ENCODE measurements at regions of chr1 and their contacts with region 1.

Region 1: GRCh38 chr1:108691942-108692723 is at the start of gene PRPF38B:
- DNase-seq: peak; percentile 91
- ATAC-seq: peak; percentile 89
- H3K4me3 Mint-ChIP-seq: peak within 1 kb of the TSS; percentile 99
- H3K27ac Mint-ChIP-seq: peak within 1 kb of the TSS; percentile 98
- H3K4me1 Mint-ChIP-seq: peaks cover 46% of the 10 kb centered on the region
- H3K27me3 Mint-ChIP-seq: no peaks in the 10 kb centered on the region
- CTCF ChIP-seq: no peak
- total RNA-seq, gene PRPF38B: 77.3 and 88.1 TPM in 2 replicates

Region 2: DNA sequence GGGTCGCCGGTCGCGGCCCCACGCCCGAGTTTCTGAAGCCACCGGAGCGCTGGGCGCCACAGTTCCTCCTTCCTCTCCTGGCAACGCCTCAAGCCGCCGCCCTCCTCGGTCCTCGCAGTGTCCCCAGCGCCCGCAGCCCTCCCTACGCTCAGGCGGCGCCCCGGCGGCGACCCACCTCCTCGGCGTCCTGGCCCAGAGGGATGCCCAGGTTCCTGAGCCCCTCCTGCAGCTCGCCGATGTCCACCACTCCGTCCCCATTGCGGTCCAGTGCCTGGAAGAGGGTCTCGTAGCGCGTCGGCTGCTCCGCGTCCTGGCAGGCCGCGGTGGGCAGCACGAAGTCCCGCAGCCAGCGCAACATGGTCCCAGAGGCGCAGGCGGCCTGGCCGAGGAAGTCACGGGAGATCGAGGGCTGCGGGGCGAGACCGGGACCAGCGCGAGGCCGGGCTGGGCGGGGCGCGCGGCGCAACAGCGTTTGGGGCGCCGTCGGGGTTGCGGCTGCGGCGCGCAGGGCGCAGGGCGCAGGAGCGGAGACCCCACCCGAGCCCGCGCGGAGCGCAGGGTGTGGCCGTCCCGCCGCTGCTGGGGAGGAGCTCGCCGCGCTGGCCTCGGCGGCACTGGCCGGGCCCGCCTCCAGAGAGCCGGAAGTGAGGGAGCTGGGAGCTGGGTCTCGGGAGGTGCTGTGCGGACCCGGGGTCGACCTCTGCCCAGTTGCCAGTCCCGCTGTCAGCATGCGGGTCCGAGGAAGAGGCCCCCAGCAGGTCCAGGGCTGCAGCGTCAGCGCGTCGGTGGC is 492.2 kb before region 1 on chr1 and contains the start of gene SLC25A24:
- CTCF ChIA-PET with region 1: no interaction called
- POLR2A ChIA-PET with region 1: interaction called, 13 read pairs
- intact Hi-C with region 1: loop called (anchors 1 kb)
- DNase-seq: peak; percentile 85
- ATAC-seq: peak; percentile 94
- H3K4me3 Mint-ChIP-seq: peak within 1 kb of the TSS; percentile 93
- H3K27ac Mint-ChIP-seq: peak within 1 kb of the TSS; percentile 86
- H3K4me1 Mint-ChIP-seq: peaks cover 29% of the 10 kb centered on the region
- H3K27me3 Mint-ChIP-seq: no peaks in the 10 kb centered on the region
- CTCF ChIP-seq: no peak
- total RNA-seq, gene SLC25A24: 20.2 and 22.1 TPM in 2 replicates

Region 3: DNA sequence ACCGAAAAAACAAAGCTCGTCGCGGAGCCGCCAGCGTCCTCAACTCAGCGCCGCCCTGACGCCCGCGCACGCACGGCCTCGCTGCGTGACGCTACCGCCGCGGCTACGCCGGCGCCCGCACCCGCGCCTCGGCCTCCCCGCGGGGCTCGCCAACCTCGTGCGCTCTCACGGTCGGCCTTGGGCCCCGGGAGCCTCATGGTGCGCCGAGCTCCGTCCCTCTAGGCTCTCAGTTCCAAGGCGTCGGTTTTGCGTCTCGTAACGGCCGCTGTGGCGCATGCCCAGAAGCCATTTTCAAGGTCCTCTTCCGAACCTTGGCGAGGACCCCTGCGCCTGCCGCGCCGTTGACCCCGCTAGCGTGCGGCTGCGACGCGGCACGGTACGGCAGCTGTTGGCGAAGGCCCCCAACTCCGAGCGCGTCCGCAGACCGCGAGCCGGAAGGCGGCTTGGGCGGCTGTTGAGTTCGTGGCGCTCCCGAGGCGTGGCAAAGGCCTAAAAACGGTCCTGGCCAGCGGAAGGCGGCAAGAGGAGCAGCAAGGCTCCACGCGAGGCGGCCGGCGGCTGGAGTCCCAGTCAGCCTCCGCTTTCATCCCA is 31.0 kb before region 1 on chr1 and contains the start of gene HENMT1:
- CTCF ChIA-PET with region 1: interaction called, 4 read pairs
- POLR2A ChIA-PET with region 1: interaction called, 110 read pairs
- intact Hi-C with region 1: loop called (anchors 1 kb)
- DNase-seq: peak; percentile 75
- ATAC-seq: peak; percentile 82
- H3K4me3 Mint-ChIP-seq: peak within 1 kb of the TSS; percentile 86
- H3K27ac Mint-ChIP-seq: peak within 1 kb of the TSS; percentile 90
- H3K4me1 Mint-ChIP-seq: peaks cover 12% of the 10 kb centered on the region
- H3K27me3 Mint-ChIP-seq: no peaks in the 10 kb centered on the region
- CTCF ChIP-seq: no peak
- total RNA-seq, gene HENMT1: 6.1 and 6.4 TPM in 2 replicates

Region 4: GRCh38 chr1:108862698-108863477 is 170.8 kb after region 1 on chr1:
- CTCF ChIA-PET with region 1: no interaction called
- POLR2A ChIA-PET with region 1: interaction called, 10 read pairs
- intact Hi-C with region 1: no loop called
- DNase-seq: no peak
- ATAC-seq: peak; percentile 96
- H3K4me3 Mint-ChIP-seq: no peak overlapping the region
- H3K27ac Mint-ChIP-seq: peak overlapping the region; percentile 81
- H3K4me1 Mint-ChIP-seq: peaks cover 22% of the 10 kb centered on the region
- H3K27me3 Mint-ChIP-seq: peaks cover 1% of the 10 kb centered on the region
- CTCF ChIP-seq: no peak

Region 5: DNA sequence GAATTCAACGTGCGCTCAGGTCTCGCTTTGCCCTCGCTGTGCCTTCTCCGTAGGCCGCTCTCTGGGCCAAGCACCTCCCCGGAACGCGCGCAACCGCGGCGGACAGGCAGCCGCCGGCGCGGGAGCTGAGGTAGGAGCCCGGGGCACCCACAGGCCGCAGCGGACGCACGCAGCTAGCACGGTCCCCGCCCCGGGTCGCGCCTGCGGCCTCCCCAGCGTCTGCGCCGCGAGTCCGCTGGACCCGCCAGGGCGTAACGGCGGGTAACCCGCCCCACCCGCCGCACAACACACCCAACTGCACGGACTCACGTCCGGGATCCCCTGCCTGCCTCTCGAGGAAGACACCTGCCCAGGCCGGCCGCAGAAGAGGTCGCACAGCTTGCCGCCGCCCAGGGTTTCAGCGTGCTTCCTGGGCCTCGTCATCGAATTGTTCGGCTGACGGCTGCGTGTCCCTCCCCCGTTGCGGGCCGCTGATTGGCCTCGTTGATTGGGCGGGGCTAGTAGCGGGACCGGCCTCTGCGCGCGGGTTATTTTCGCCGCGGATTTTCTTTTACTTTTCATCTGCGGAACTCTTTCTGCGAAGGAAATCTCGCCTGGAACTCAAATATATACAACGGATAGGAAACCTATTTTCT is 271.0 kb after region 1 on chr1 and contains the start of gene CLCC1:
- CTCF ChIA-PET with region 1: no interaction called
- POLR2A ChIA-PET with region 1: interaction called, 12 read pairs
- intact Hi-C with region 1: loop called (anchors 2 kb)
- DNase-seq: peak; percentile 84
- ATAC-seq: peak; percentile 94
- H3K4me3 Mint-ChIP-seq: peak within 1 kb of the TSS; percentile 88
- H3K27ac Mint-ChIP-seq: peak within 1 kb of the TSS; percentile 91
- H3K4me1 Mint-ChIP-seq: peaks cover 35% of the 10 kb centered on the region
- H3K27me3 Mint-ChIP-seq: no peaks in the 10 kb centered on the region
- CTCF ChIP-seq: no peak
- total RNA-seq, gene CLCC1: 19.5 and 28.3 TPM in 2 replicates

Region 6: GRCh38 chr1:109090196-109091077 is 398.3 kb after region 1 on chr1 and contains the start of gene TMEM167B:
- CTCF ChIA-PET with region 1: no interaction called
- POLR2A ChIA-PET with region 1: interaction called, 3 read pairs
- intact Hi-C with region 1: loop called (anchors 2 kb)
- DNase-seq: peak; percentile 79
- ATAC-seq: peak; percentile 87
- H3K4me3 Mint-ChIP-seq: peak within 1 kb of the TSS; percentile 98
- H3K27ac Mint-ChIP-seq: peak within 1 kb of the TSS; percentile 97
- H3K4me1 Mint-ChIP-seq: peaks cover 35% of the 10 kb centered on the region
- H3K27me3 Mint-ChIP-seq: no peaks in the 10 kb centered on the region
- CTCF ChIP-seq: no peak
- total RNA-seq, gene TMEM167B: 45.0 and 48.2 TPM in 2 replicates

Region 7: DNA sequence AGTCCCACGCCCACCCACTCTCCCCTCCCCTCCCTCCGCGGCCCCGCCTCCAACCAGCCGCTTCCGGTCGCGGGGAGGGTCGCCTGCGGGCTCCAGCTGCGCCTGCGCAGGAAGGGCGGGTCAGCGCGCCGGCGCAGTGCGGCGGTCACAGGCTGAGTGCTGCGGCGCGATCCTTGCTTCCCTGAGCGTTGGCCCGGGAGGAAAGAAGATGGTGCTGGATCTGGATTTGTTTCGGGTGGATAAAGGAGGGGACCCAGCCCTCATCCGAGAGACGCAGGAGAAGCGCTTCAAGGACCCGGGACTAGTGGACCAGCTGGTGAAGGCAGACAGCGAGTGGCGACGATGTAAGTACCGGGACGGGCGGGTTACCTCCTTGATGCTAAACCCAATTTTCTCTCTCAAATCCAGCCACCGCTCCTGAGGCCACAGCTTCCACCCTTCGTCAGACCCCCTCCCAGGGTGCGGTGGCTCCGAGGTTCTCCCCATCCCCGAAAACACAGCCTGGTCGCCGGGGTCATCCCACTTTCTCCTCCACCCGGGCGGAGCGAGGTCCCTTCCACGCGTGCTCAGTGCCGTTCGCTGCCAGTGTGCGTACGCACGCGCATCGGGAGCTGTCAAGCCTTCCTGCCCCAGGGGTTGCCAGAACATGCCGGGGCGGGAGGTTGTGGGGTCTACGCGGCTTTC is 521.8 kb after region 1 on chr1 and contains the start of gene SARS1:
- CTCF ChIA-PET with region 1: no interaction called
- POLR2A ChIA-PET with region 1: interaction called, 10 read pairs
- intact Hi-C with region 1: no loop called
- DNase-seq: peak; percentile 93
- ATAC-seq: peak; percentile 84
- H3K4me3 Mint-ChIP-seq: peak within 1 kb of the TSS; percentile 100
- H3K27ac Mint-ChIP-seq: peak within 1 kb of the TSS; percentile 98
- H3K4me1 Mint-ChIP-seq: peaks cover 39% of the 10 kb centered on the region
- H3K27me3 Mint-ChIP-seq: no peaks in the 10 kb centered on the region
- CTCF ChIP-seq: no peak
- total RNA-seq, gene SARS1: 182 and 188 TPM in 2 replicates

Measured in activated B cell treated with CpG ODN at 0.5 μM for 24 hours (primary cell).